CD8-positive, alpha-beta T cell (primary cell): ENCODE measurements at regions of chr3 and their contacts with region 1.

Region 1: GRCh38 chr3:187745201-187746058 is at the start of gene BCL6:
- DNase-seq: peak; percentile 71 to 97 (median 84)
- ATAC-seq: peak; percentile 64
- H3K4me3 ChIP-seq: peak within 1 kb of the TSS; percentile 88 to 89
- H3K4me3 Mint-ChIP-seq: peak within 1 kb of the TSS; percentile 94
- H3K27ac ChIP-seq: peak within 1 kb of the TSS; percentile 98 to 99
- H3K27ac Mint-ChIP-seq: peak within 1 kb of the TSS; percentile 100
- H3K4me1 ChIP-seq: peaks cover 38% of the 10 kb centered on the region
- H3K4me1 Mint-ChIP-seq: peaks cover 77% of the 10 kb centered on the region
- H3K27me3 ChIP-seq: no peaks in the 10 kb centered on the region
- H3K27me3 Mint-ChIP-seq: no peaks in the 10 kb centered on the region
- CTCF ChIP-seq: no peak
- total RNA-seq, gene BCL6: 89.2 to 93.1 TPM

Region 2: DNA sequence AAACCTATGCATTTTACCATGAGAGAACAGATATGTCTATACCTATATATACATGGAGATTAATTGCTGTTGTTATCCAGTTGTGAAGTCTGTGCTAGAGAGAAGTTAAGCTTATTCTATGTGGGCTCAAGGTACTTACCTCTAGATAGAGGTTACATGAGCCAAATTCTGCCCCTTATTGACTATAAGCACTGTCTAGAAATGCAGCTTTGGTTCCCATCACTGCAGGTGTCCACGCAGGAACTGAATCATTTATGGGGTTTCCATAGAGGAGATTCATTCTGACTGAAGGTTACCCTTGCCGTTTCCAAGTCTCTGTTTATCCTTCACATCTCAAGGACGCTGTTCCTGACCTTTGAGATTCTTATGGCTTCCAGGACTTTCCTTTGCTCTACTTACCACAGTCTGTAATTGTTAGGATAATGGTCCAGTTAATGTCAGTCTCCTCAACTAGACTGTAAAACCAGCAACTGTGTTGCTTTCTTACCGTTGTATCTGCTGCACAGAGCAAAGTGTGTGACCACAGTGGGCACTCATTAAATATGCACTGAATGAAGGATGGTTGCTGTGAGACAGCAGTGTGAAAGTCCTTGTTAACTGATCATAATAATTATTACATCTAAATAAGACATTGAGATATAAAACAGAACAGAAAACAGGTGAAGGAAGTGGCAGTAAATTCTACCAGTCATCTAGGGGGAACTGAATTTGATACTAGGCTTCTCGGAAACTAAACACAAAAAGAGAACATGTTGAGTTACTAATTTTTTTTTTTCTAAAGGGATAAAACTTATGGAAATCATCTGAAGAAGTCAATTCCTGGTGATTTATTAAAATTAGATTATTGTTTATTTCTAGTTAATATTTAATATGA is 43.8 kb after region 1 on chr3:
- CTCF ChIA-PET with region 1: no interaction called
- POLR2A ChIA-PET with region 1: no interaction called
- intact Hi-C with region 1: no loop called
- DNase-seq: no peak
- ATAC-seq: no peak
- H3K4me3 ChIP-seq: no peak overlapping the region
- H3K4me3 Mint-ChIP-seq: no peak overlapping the region
- H3K27ac ChIP-seq: no peak overlapping the region
- H3K27ac Mint-ChIP-seq: no peak overlapping the region
- H3K4me1 ChIP-seq: no peaks in the 10 kb centered on the region
- H3K4me1 Mint-ChIP-seq: peaks cover 5% of the 10 kb centered on the region
- H3K27me3 ChIP-seq: no peaks in the 10 kb centered on the region
- H3K27me3 Mint-ChIP-seq: no peaks in the 10 kb centered on the region
- CTCF ChIP-seq: no peak

Region 3: DNA sequence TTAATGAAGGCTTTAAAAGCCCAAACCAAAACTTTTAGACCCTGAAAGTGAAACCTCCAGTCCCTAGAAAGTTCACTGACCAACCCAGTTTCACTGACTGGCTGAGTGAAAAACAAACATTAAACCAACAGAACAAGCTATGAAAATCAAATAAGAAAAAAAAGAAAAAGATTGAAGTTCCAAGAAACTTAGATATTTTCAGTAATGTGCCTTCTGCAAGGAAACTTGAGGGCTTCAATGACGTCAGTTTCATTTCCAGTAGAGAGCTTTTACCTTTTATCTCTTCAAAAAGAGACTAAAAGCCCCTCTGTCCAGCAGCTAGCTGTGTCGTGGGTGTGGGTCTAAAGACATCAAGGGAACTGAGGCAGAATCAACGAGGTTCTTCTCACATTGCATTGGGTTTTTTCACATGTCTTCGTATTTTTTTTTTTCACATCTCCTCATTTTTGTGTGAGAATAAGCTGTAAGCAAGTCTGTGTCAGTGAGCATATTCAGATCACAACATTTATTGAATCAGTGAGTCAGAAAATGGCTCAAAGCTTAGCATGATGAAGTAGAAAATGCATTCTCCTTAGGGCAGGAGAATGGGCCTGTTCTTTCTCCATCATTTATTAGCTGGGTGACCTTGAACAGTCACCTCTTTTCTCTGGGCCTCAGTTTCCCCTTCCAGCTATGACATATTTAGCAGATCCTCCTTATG is 54.7 kb after region 1 on chr3:
- CTCF ChIA-PET with region 1: interaction called, 3 read pairs
- POLR2A ChIA-PET with region 1: interaction called, 3 read pairs
- intact Hi-C with region 1: loop called in 1 of 2 experiments (anchors 5 kb)
- DNase-seq: peak in 2 of 9 experiments; percentile 16 to 46
- ATAC-seq: peak; percentile 19
- H3K4me3 ChIP-seq: no peak overlapping the region
- H3K4me3 Mint-ChIP-seq: peak overlapping the region; percentile 33
- H3K27ac ChIP-seq: peak overlapping the region in 1 of 2 experiments; percentile 49
- H3K27ac Mint-ChIP-seq: peak overlapping the region; percentile 63
- H3K4me1 ChIP-seq: peaks cover 28% of the 10 kb centered on the region
- H3K4me1 Mint-ChIP-seq: peaks cover 54% of the 10 kb centered on the region
- H3K27me3 ChIP-seq: no peaks in the 10 kb centered on the region
- H3K27me3 Mint-ChIP-seq: no peaks in the 10 kb centered on the region
- CTCF ChIP-seq: no peak

Region 4: GRCh38 chr3:187974871-187975271 is 229.4 kb after region 1 on chr3:
- CTCF ChIA-PET with region 1: interaction called, 14 read pairs
- POLR2A ChIA-PET with region 1: interaction called, 6 read pairs
- intact Hi-C with region 1: loop called (anchors 5 kb)
- DNase-seq: peak in 2 of 9 experiments; percentile 51 to 63
- ATAC-seq: peak; percentile 65
- H3K4me3 ChIP-seq: peak overlapping the region; percentile 8 to 13
- H3K4me3 Mint-ChIP-seq: peak overlapping the region; percentile 68
- H3K27ac ChIP-seq: peak overlapping the region in 1 of 2 experiments; percentile 56
- H3K27ac Mint-ChIP-seq: peak overlapping the region; percentile 79
- H3K4me1 ChIP-seq: peaks cover 34% of the 10 kb centered on the region
- H3K4me1 Mint-ChIP-seq: peaks cover 51% of the 10 kb centered on the region
- H3K27me3 ChIP-seq: no peaks in the 10 kb centered on the region
- H3K27me3 Mint-ChIP-seq: no peaks in the 10 kb centered on the region
- CTCF ChIP-seq: peak; percentile 58

Region 5: DNA sequence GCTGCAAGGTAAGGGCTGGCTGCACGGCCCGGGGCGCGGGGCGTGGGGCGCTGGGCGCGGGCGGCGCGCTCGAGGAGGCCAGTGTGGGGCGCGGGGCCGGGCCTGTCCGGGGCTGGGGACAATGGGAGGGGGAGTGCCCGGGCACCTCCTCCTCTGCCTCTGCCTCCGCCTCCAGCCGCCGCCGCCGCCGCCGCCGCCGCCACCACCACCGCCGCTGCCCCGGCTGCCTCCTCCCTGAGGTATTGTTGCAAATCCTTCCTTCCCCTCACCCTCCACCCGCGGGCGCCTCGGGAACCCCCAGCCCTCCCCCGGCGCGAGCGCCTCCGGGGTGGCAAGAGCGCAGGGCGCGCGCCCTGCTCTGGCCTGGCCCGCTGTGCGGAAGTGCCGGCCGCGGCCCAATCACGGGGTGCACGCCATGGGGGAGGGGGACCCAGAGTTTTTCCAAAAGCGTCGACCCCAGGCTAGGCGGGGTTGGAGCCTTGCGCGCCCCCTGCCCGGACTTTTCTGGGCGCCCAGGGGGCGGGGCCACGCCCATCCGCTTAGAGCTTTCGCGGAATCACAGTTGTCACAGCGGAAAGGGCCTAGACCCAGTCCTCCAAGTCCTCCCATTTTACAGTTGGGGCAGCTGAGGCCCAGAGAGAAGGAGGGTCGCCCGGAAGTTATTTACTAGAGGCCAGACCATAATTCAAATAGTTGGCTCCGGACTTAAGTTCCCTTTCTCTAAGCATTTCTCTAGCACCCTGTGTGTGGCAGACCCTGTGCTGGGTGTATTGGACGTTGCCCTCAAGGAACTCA is 408.8 kb after region 1 on chr3 and contains the start of gene LPP:
- CTCF ChIA-PET with region 1: interaction called, 15 read pairs
- POLR2A ChIA-PET with region 1: interaction called, 8 read pairs
- intact Hi-C with region 1: loop called (anchors 1 to 5 kb)
- DNase-seq: peak; percentile 60 to 93 (median 79)
- ATAC-seq: peak; percentile 84
- H3K4me3 ChIP-seq: peak within 1 kb of the TSS; percentile 72 to 81
- H3K4me3 Mint-ChIP-seq: peak within 1 kb of the TSS; percentile 88
- H3K27ac ChIP-seq: peak within 1 kb of the TSS; percentile 64 to 79
- H3K27ac Mint-ChIP-seq: peak within 1 kb of the TSS; percentile 90
- H3K4me1 ChIP-seq: peaks cover 27% of the 10 kb centered on the region
- H3K4me1 Mint-ChIP-seq: peaks cover 52% of the 10 kb centered on the region
- H3K27me3 ChIP-seq: no peaks in the 10 kb centered on the region
- H3K27me3 Mint-ChIP-seq: no peaks in the 10 kb centered on the region
- CTCF ChIP-seq: no peak
- total RNA-seq, gene LPP: 35.2 to 37.0 TPM

Region 6: GRCh38 chr3:188742755-188743550 is 997.5 kb after region 1 on chr3:
- CTCF ChIA-PET with region 1: interaction called, 167 read pairs
- POLR2A ChIA-PET with region 1: interaction called, 8 read pairs
- intact Hi-C with region 1: loop called in 1 of 2 experiments (anchors 2 kb)
- DNase-seq: no peak
- ATAC-seq: no peak
- H3K4me3 ChIP-seq: no peak overlapping the region
- H3K4me3 Mint-ChIP-seq: no peak overlapping the region
- H3K27ac ChIP-seq: no peak overlapping the region
- H3K27ac Mint-ChIP-seq: no peak overlapping the region
- H3K4me1 ChIP-seq: no peaks in the 10 kb centered on the region
- H3K4me1 Mint-ChIP-seq: no peaks in the 10 kb centered on the region
- H3K27me3 ChIP-seq: no peaks in the 10 kb centered on the region
- H3K27me3 Mint-ChIP-seq: no peaks in the 10 kb centered on the region
- CTCF ChIP-seq: no peak

Region 7: DNA sequence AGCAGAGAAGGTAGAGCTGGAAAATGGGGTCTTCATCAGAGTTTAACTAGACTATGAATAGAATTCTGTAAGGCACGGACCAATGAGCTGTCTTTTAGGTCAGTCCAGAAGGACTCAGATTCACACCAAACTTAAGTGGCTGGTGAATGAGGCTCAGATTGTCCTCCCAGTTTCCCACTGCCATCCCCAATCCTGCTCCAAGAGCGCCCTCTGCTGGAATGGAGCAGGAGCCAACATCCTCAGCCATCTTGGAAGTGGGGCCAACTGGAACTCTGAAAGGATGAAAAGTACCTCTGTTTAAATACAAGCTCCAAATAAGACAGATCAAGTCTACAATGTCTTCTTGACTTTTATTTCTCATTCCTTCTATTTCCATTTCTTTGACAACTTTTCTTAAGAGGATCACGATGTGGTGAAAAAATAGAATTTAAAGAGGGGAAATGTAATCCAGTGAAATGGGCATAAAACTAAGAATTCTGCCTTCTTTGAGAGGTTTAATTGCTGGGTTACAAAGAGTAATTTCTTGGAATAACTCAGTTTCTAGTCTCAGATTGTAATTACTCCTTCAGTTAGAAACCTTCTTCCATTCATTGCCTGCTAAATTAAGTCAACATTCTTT is 1209.3 kb after region 1 on chr3:
- CTCF ChIA-PET with region 1: interaction called, 425 read pairs
- POLR2A ChIA-PET with region 1: interaction called, 30 read pairs
- intact Hi-C with region 1: loop called in 1 of 2 experiments (anchors 1 kb)
- DNase-seq: peak; percentile 47 to 84 (median 71)
- ATAC-seq: peak; percentile 57
- H3K4me3 ChIP-seq: no peak overlapping the region
- H3K4me3 Mint-ChIP-seq: no peak overlapping the region
- H3K27ac ChIP-seq: no peak overlapping the region
- H3K27ac Mint-ChIP-seq: no peak overlapping the region
- H3K4me1 ChIP-seq: no peaks in the 10 kb centered on the region
- H3K4me1 Mint-ChIP-seq: peaks cover 5% of the 10 kb centered on the region
- H3K27me3 ChIP-seq: no peaks in the 10 kb centered on the region
- H3K27me3 Mint-ChIP-seq: no peaks in the 10 kb centered on the region
- CTCF ChIP-seq: peak; percentile 64